AG04450 (cell line): ENCODE measurements at regions of chr5 and their contacts with region 1.

Region 1: GRCh38 chr5:71475788-71476384 is 20.4 kb downstream of the BDP1 start:
- DNase-seq: no peak
- H3K4me3 ChIP-seq: no peak overlapping the region
- H3K27ac ChIP-seq: no peak overlapping the region
- H3K27me3 ChIP-seq: no peaks in the 10 kb centered on the region
- CTCF ChIP-seq: peak; percentile 81

Region 2: DNA sequence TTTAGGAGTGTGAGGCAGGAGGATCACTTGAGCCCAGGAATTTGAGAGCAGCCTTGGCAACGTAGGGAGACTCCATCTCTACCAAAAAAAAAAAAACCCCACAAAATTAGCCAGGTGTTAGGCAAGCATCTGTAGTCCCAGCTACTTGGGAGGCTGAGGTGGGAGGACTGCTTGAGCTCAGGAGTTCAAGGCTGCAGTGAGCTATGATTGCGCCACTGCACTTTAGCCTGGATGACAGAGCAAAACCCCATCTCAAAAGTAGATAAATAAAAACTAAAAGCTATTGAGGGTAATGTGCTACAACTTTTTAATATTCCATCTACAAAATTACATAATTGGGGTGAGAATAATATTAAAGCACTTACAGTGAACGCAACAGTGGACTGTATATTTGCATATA is 14.5 kb before region 1 on chr5:
- CTCF ChIA-PET with region 1: interaction called, 11 read pairs
- POLR2A ChIA-PET with region 1: interaction called, 7 read pairs
- DNase-seq: no peak
- H3K4me3 ChIP-seq: no peak overlapping the region
- H3K27ac ChIP-seq: no peak overlapping the region
- H3K27me3 ChIP-seq: no peaks in the 10 kb centered on the region
- CTCF ChIP-seq: no peak

Region 3: GRCh38 chr5:71522151-71522550 is 46.3 kb after region 1 on chr5:
- CTCF ChIA-PET with region 1: interaction called, 10 read pairs
- POLR2A ChIA-PET with region 1: no interaction called
- DNase-seq: no peak
- H3K4me3 ChIP-seq: no peak overlapping the region
- H3K27ac ChIP-seq: no peak overlapping the region
- H3K27me3 ChIP-seq: no peaks in the 10 kb centered on the region
- CTCF ChIP-seq: no peak

Region 4: GRCh38 chr5:71615809-71616208 is 139.9 kb after region 1 on chr5:
- CTCF ChIA-PET with region 1: no interaction called
- POLR2A ChIA-PET with region 1: no interaction called
- DNase-seq: no peak
- H3K4me3 ChIP-seq: no peak overlapping the region
- H3K27ac ChIP-seq: no peak overlapping the region
- H3K27me3 ChIP-seq: no peaks in the 10 kb centered on the region
- CTCF ChIP-seq: no peak

Region 5: GRCh38 chr5:71757590-71758543 is 282.0 kb after region 1 on chr5:
- CTCF ChIA-PET with region 1: interaction called, 20 read pairs
- POLR2A ChIA-PET with region 1: no interaction called
- DNase-seq: peak; percentile 11
- H3K4me3 ChIP-seq: 0 out of 2 replicates have a peak overlapping the region, but pooled peaks have one; percentile 2
- H3K27ac ChIP-seq: no peak overlapping the region
- H3K27me3 ChIP-seq: peaks cover 11% of the 10 kb centered on the region
- CTCF ChIP-seq: peak; percentile 79